Activated naive CD4-positive, alpha-beta T cell treated with anti-CD3 and anti-CD28 coated beads, Interleukin-2, amount 10 ng/mL, durations not matched to agents 7 days and 5 days (primary cell): ENCODE measurements at regions of chr11 and their contacts with region 1.

Region 1: DNA sequence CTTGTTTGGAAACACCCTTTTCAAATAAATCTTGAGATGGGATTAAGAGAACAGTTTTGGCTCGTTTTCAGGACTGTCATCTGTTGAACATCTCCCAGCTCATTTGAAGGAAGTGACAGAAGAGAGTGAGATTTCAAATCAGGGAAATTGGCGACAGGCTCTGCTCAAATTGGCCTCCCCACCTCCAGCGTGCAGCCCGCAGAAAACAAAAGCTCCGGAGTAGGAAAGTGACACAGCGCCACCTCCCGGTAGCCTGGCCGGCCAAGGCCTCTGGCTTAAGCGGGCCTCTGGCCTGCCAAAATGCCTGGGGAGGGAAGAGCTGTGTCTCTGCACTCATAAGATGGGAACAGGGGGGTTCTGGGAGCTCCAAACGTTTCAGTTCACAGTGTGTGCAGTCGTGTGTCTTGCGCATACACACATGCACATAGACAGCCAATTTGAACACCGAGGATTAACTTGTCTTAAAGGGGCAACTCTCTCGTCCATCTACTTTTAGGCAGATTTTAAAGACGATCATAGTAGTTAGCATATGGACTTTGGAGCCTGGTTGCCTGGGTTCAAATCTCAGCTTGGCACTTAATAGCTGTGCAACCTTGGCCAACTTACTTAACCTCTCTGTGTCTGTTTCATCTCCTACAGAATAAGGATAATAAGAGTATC is 132.7 kb upstream of the RCN1 start:
- DNase-seq: peak; percentile 73
- H3K4me3 Mint-ChIP-seq: no peak overlapping the region
- H3K27ac Mint-ChIP-seq: no peak overlapping the region
- H3K4me1 Mint-ChIP-seq: peaks cover 3% of the 10 kb centered on the region
- H3K27me3 Mint-ChIP-seq: peaks cover 7% of the 10 kb centered on the region

Region 2: DNA sequence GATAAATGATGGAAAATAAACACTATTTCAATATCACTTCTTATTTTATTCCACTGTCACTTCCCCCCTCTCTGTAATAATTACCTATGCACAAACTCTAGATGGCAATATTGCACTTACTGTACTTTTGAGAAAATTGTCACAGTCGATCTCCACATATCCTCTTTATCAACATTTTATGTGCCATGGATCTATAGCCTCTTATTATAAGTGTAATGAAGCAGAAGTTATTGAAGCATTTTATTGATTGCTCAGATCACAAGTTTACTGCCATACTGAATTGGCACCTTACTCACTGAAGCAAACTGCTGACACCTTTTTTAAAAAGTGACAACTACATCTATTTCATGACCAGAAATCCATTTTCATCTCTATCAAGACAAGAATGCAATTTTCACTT is 722.1 kb before region 1 on chr11:
- CTCF ChIA-PET with region 1: interaction called, 18 read pairs
- DNase-seq: no peak
- H3K4me3 Mint-ChIP-seq: no peak overlapping the region
- H3K27ac Mint-ChIP-seq: no peak overlapping the region
- H3K4me1 Mint-ChIP-seq: no peaks in the 10 kb centered on the region
- H3K27me3 Mint-ChIP-seq: no peaks in the 10 kb centered on the region

Region 3: GRCh38 chr11:31243706-31244105 is 714.5 kb before region 1 on chr11:
- CTCF ChIA-PET with region 1: interaction called, 18 read pairs
- DNase-seq: no peak
- H3K4me3 Mint-ChIP-seq: no peak overlapping the region
- H3K27ac Mint-ChIP-seq: no peak overlapping the region
- H3K4me1 Mint-ChIP-seq: no peaks in the 10 kb centered on the region
- H3K27me3 Mint-ChIP-seq: no peaks in the 10 kb centered on the region

Region 4: GRCh38 chr11:31947051-31947769 is 11.0 kb before region 1 on chr11:
- CTCF ChIA-PET with region 1: interaction called, 10 read pairs
- DNase-seq: no peak
- H3K4me3 Mint-ChIP-seq: no peak overlapping the region
- H3K27ac Mint-ChIP-seq: no peak overlapping the region
- H3K4me1 Mint-ChIP-seq: peaks cover 30% of the 10 kb centered on the region
- H3K27me3 Mint-ChIP-seq: peaks cover 15% of the 10 kb centered on the region

Region 5: DNA sequence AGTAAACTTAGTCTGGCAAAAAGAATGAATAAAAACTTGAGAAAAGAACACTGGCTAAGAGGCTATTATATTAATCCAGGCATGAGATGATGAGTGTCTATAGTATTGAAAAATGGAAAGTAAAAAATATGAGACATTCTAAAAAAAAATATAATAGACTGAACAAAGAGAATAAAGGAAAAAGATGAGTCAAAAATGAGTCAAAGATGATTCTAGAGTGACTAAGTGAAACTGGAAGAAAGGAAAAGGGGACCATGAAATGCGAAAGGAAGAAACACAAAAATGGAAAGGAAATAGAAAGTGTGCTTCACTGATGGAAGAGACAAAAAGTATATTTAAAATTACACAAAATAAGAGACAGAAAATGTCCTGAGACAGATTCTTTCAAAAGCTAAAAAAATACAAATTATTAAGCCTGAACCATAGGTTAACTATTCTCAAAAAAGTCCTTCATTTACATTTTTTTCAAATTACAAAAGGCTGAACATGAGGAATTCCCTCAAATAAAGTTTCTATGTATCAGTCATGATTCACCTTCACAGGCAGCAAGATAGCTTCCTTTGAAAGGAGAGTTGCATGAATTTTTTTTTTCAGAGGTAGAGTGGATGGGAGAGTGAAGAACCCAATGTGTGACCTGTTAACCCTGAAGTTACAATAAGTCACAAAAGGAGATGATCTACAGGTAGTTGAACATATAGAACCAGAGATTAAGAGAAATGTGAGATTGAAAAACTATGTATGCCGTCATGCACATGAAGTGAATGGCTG is 700.6 kb after region 1 on chr11:
- CTCF ChIA-PET with region 1: no interaction called
- DNase-seq: no peak
- H3K4me3 Mint-ChIP-seq: no peak overlapping the region
- H3K27ac Mint-ChIP-seq: no peak overlapping the region
- H3K4me1 Mint-ChIP-seq: no peaks in the 10 kb centered on the region
- H3K27me3 Mint-ChIP-seq: no peaks in the 10 kb centered on the region